ENCODE measurements at regions of chr3 and their contacts with region 1.

Region 1: DNA sequence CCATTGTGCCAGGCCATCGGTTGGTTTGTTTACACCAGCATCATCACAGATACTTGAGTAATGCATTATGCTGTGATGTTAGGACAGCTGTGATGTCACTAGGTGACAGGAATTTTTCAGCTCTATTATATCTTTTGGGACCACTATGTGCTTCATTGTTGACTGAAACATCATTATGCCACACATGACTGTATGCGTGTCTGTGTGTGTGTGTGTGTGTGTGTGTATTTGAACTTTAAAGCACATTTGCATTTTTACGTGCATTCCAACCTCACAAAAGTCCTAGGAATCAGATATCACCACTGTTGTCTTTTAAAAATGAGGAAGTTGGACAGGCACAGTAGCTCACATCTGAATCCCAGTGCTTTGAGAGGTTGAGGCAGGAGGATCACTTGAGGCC is 223.0 kb downstream of the TBL1XR1 start:
- DNase-seq: no peak
- CTCF ChIP-seq: no peak

Region 2: GRCh38 chr3:176961916-176962315 is 12.4 kb before region 1 on chr3:
- CTCF ChIA-PET with region 1: interaction called, 12 read pairs
- POLR2A ChIA-PET with region 1: no interaction called
- DNase-seq: no peak
- CTCF ChIP-seq: no peak

Measured in GM10248 (cell line).